ENCODE measurements at regions of chr17 and their contacts with region 1.

Region 1: GRCh38 chr17:58006924-58007780 is at the start of gene SRSF1:
- DNase-seq: peak; percentile 80
- H3K4me3 ChIP-seq: peak within 1 kb of the TSS; percentile 77
- H3K27me3 ChIP-seq: no peaks in the 10 kb centered on the region
- CTCF ChIP-seq: no peak
- polyA plus RNA-seq, gene SRSF1: 222 and 236 TPM in 2 replicates

Region 2: DNA sequence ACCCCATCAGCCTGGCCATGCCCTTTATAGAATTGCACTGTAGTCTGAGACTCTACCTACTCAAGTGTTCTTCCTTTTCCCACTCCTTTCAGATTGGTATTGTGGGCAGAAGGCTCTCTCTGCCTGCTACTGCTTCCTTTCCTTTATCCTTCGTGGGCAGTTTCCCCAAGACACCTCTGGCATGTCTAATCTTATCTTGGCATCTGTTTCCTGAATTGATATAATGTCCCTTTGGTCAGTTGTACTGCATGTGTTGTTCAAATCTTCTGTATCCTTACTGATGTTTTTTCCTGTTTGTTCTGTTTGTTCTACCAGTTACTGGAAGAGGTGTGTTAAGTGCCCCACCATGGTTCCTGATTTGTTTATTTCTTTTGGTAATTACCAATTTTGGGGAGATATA is 780.4 kb before region 1 on chr17:
- CTCF ChIA-PET with region 1: no interaction called
- POLR2A ChIA-PET with region 1: interaction called, 25 read pairs
- DNase-seq: no peak
- H3K4me3 ChIP-seq: no peak overlapping the region
- H3K27me3 ChIP-seq: peaks cover 6% of the 10 kb centered on the region; the same call in 1 of the 2 replicates
- CTCF ChIP-seq: no peak

Region 3: GRCh38 chr17:57886020-57886419 is 121.1 kb before region 1 on chr17:
- CTCF ChIA-PET with region 1: no interaction called
- POLR2A ChIA-PET with region 1: no interaction called
- DNase-seq: no peak
- H3K4me3 ChIP-seq: no peak overlapping the region
- H3K27me3 ChIP-seq: no peaks in the 10 kb centered on the region
- CTCF ChIP-seq: no peak

Region 4: DNA sequence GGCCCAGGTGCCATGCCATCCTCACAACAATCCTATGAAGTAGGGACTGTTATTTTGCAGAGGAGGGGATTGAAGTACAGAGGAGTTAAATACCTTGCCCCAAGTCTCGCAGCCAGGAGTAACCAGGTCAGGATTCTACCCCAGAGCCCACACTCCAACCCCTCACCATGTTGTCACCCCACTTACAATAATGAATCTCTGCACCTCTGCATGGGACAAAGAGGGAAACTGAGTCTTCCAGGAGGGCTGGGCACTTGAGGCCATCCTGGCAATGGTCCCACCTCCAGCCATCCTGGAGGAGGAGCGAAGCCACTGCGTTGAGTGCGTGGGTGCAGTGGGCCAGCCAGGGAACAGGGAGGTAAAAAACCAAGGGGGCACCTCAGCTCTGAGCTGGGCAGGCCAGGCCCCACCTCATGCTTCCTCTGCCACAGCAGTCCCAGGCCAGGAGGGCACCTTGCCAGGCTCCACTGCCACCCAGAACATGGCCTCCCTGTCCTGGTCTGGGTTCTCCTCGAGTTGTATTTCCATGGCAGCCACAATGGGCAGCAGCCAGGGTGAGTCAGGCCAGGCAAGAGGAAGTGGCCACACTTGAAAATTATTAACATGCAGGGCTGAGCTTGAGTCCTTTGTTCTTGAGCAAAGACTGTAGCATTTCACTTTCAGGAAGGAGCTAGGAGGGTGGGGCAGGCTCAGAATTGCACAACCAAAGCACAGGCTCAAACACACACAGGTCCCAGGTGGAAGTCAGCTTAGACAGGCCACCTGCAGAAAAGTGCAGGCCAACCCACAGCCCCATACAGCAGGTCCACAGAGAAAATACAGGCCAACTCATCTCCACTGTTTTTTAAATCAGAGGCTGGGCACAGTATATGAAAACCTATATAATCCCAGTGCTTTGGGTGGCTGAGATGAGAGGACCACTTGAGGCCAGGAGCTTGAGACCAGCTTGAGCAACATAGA is 104.1 kb before region 1 on chr17:
- CTCF ChIA-PET with region 1: no interaction called
- POLR2A ChIA-PET with region 1: no interaction called
- DNase-seq: peak; percentile 68
- H3K4me3 ChIP-seq: no peak overlapping the region
- H3K27me3 ChIP-seq: no peaks in the 10 kb centered on the region
- CTCF ChIP-seq: no peak

Region 5: GRCh38 chr17:58032691-58033415 is 25.7 kb after region 1 on chr17:
- CTCF ChIA-PET with region 1: no interaction called
- POLR2A ChIA-PET with region 1: no interaction called
- DNase-seq: no peak
- H3K4me3 ChIP-seq: no peak overlapping the region
- H3K27me3 ChIP-seq: no peaks in the 10 kb centered on the region
- CTCF ChIP-seq: no peak

Region 6: GRCh38 chr17:58112970-58113631 is 105.9 kb after region 1 on chr17:
- CTCF ChIA-PET with region 1: interaction called, 11 read pairs
- POLR2A ChIA-PET with region 1: no interaction called
- DNase-seq: no peak
- H3K4me3 ChIP-seq: no peak overlapping the region
- H3K27me3 ChIP-seq: peaks cover 3% of the 10 kb centered on the region
- CTCF ChIP-seq: peak; percentile 95

Region 7: DNA sequence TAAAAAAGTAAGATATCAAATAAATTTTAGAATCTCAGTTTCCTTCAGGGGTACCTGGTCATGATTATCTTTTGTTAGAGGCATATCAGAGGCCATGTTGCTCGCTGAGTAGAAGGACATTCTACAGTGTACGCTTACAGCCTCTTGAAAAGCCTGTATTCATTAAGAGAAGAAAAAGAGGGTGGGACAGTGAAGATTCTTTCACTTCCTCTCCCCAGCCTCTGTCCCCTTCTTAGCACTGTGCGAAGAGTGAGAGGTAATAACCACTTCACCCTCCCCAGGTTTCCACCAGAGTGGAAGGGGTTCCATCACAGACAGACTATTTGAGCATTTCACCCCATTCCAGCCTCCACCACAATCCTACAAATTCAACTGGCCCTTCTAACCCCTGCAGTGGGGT is 226.4 kb after region 1 on chr17:
- CTCF ChIA-PET with region 1: no interaction called
- POLR2A ChIA-PET with region 1: no interaction called
- DNase-seq: no peak
- H3K4me3 ChIP-seq: no peak overlapping the region
- H3K27me3 ChIP-seq: peaks cover 10% of the 10 kb centered on the region
- CTCF ChIP-seq: no peak

Measured in BJ (cell line).